Activated T-helper 2 cell treated with anti-CD3 and anti-CD28 coated beads, Interferon-gamma antibody, Interleukin-2, Interleukin-4, amounts not matched to agents 10 μg/mL and 5 μg/mL and 100 μg/mL, durations not matched to agents 14 hours and 24 hours and 36 hours (primary cell): ENCODE measurements at regions of chr15 and their contacts with region 1.

Region 1: DNA sequence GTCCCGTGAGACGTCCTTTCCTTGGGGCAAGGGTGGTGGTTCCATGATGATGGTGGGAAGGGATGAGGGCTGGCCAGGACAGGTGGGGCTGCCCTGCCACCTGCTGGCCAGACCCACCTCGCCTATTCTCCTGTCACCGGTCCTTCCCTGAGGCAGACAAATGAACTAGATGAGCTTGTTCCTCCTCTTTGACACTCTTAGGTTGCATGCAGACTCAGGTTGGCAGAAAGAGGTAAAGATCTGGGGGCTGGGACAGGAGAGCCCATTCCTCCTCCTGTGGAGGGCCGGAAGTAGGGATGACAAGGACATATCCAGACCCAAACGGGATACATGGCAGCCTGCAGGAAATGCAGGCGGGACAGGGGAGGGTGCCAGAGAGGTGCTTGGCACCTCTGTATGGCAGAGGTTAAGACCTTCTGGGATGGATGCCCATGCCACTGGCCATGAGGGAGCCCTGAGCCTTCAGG is 38.6 kb downstream of the ACSBG1 start:
- DNase-seq: peak; percentile 23
- H3K4me3 Mint-ChIP-seq: no peak overlapping the region
- H3K27ac Mint-ChIP-seq: no peak overlapping the region
- H3K4me1 Mint-ChIP-seq: no peaks in the 10 kb centered on the region
- H3K27me3 Mint-ChIP-seq: peaks cover 8% of the 10 kb centered on the region

Region 2: GRCh38 chr15:77966540-77967290 is 229.1 kb before region 1 on chr15:
- intact Hi-C with region 1: loop called (anchors 10 kb)
- DNase-seq: no peak
- H3K4me3 Mint-ChIP-seq: no peak overlapping the region
- H3K27ac Mint-ChIP-seq: no peak overlapping the region
- H3K4me1 Mint-ChIP-seq: peaks cover 2% of the 10 kb centered on the region
- H3K27me3 Mint-ChIP-seq: peaks cover 36% of the 10 kb centered on the region

Region 3: GRCh38 chr15:78241007-78241406 is 45.2 kb after region 1 on chr15:
- intact Hi-C with region 1: loop called (anchors 2 kb)
- DNase-seq: peak; percentile 70
- H3K4me3 Mint-ChIP-seq: no peak overlapping the region
- H3K27ac Mint-ChIP-seq: no peak overlapping the region
- H3K4me1 Mint-ChIP-seq: peaks cover 3% of the 10 kb centered on the region
- H3K27me3 Mint-ChIP-seq: peaks cover 6% of the 10 kb centered on the region

Region 4: GRCh38 chr15:78506971-78507830 is 311.4 kb after region 1 on chr15 and contains the start of gene HYKK:
- intact Hi-C with region 1: no loop called
- DNase-seq: peak; percentile 74
- H3K4me3 Mint-ChIP-seq: peak within 1 kb of the TSS; percentile 88
- H3K27ac Mint-ChIP-seq: no peak within 1 kb of the TSS
- H3K4me1 Mint-ChIP-seq: peaks cover 16% of the 10 kb centered on the region
- H3K27me3 Mint-ChIP-seq: peaks cover 23% of the 10 kb centered on the region
- total RNA-seq, gene HYKK: 0.74 and 0.89 TPM in 2 replicates

Region 5: GRCh38 chr15:78654272-78654671 is 458.5 kb after region 1 on chr15:
- intact Hi-C with region 1: no loop called
- DNase-seq: no peak
- H3K4me3 Mint-ChIP-seq: no peak overlapping the region
- H3K27ac Mint-ChIP-seq: no peak overlapping the region
- H3K4me1 Mint-ChIP-seq: no peaks in the 10 kb centered on the region
- H3K27me3 Mint-ChIP-seq: peaks cover 9% of the 10 kb centered on the region